ENCODE measurements at regions of chr7 and their contacts with region 1.

Region 1: GRCh38 chr7:105141068-105141467 is 127.1 kb downstream of the KMT2E start:
- DNase-seq: peak; percentile 23
- H3K4me3 ChIP-seq: no peak overlapping the region
- H3K27ac ChIP-seq: no peak overlapping the region
- H3K4me1 ChIP-seq: no peaks in the 10 kb centered on the region
- CTCF ChIP-seq: peak; percentile 64

Region 2: GRCh38 chr7:105173586-105173985 is 32.5 kb after region 1 on chr7:
- CTCF ChIA-PET with region 1: no interaction called
- POLR2A ChIA-PET with region 1: no interaction called
- intact Hi-C with region 1: no loop called
- DNase-seq: no peak
- H3K4me3 ChIP-seq: no peak overlapping the region
- H3K27ac ChIP-seq: no peak overlapping the region
- H3K4me1 ChIP-seq: no peaks in the 10 kb centered on the region
- CTCF ChIP-seq: no peak

Region 3: DNA sequence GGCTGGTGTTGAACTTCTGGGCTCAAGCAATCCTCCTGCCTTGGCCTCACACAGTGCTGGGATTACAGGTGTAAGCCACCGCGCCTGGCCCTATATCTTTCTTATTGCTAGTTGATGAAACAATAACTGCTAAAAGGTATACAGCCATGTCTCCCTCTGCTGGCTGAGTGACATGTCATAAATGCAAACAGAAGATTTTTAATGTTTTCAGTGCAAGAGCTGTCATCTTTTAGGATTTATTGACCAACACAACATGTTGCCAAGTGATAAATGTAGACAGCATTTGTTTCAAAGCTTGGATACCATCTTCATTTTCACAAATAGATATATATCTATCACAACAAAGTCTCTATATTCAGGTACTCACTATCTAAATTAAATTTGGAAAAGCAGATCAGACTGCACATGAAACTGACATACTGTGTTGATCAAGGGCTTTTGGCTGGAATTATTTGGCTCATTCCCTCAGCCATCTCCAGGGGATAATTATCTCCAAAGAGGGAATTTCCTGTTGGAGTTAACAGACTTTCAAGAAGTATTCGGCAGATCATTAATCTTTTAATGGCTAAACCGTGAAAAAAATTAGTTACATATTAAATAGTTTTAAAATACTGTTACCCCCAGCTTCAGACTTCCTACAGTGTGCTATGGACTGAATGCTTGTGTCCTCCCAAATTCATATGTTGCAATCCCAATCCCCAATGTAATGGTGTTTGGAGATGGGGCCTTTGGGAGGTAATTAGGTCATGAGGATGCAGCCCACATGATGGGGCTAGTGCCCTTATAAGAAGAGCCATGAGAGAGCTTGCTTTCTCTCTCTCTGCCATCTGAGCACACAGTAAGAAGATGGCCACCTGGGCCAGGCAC is 288.9 kb after region 1 on chr7:
- CTCF ChIA-PET with region 1: no interaction called
- POLR2A ChIA-PET with region 1: no interaction called
- intact Hi-C with region 1: loop called (anchors 10 kb)
- DNase-seq: peak; percentile 63
- H3K4me3 ChIP-seq: no peak overlapping the region
- H3K27ac ChIP-seq: no peak overlapping the region
- H3K4me1 ChIP-seq: no peaks in the 10 kb centered on the region
- CTCF ChIP-seq: peak; percentile 79